ENCODE measurements at regions of chr5 and their contacts with region 1.

Region 1: GRCh38 chr5:56814963-56815658 is at the start of gene MAP3K1:
- DNase-seq: peak; percentile 83 to 93
- H3K4me3 ChIP-seq: peak within 1 kb of the TSS; percentile 96
- H3K27ac ChIP-seq: peak within 1 kb of the TSS; percentile 91
- H3K4me1 ChIP-seq: peaks cover 50% of the 10 kb centered on the region
- H3K27me3 ChIP-seq: no peaks in the 10 kb centered on the region
- CTCF ChIP-seq: no peak
- total RNA-seq, gene MAP3K1: 21.8 and 26.1 TPM in 2 replicates

Region 2: GRCh38 chr5:56211298-56211865 is 603.7 kb before region 1 on chr5:
- CTCF ChIA-PET with region 1: no interaction called
- POLR2A ChIA-PET with region 1: no interaction called
- intact Hi-C with region 1: loop called (anchors 5 kb)
- DNase-seq: peak; percentile 70 to 94
- H3K4me3 ChIP-seq: no peak overlapping the region
- H3K27ac ChIP-seq: peak overlapping the region; percentile 87
- H3K4me1 ChIP-seq: peaks cover 26% of the 10 kb centered on the region
- H3K27me3 ChIP-seq: no peaks in the 10 kb centered on the region
- CTCF ChIP-seq: no peak

Region 3: DNA sequence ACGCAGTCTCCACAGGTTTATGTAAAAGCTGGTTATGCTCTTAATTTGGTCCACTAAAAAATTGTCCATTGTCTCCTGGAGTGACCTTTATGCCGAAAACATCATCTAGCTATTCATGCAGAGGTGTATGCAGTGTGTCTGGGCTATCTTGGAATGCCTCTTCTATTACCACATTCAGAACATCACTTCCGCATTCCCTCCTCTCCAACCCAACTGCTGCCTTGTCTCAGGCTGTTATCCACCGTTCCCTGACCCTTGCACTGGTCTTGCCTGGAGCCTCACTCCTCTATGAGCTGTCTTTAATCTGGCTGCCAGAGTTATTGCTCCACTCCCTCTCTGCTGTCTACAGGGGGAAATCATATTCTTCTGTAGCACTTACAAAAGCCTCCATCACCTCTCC is 367.9 kb before region 1 on chr5:
- CTCF ChIA-PET with region 1: no interaction called
- POLR2A ChIA-PET with region 1: no interaction called
- intact Hi-C with region 1: loop called (anchors 5 kb)
- DNase-seq: peak; percentile 75 to 96
- H3K4me3 ChIP-seq: no peak overlapping the region
- H3K27ac ChIP-seq: peak overlapping the region; percentile 79
- H3K4me1 ChIP-seq: peaks cover 32% of the 10 kb centered on the region
- H3K27me3 ChIP-seq: no peaks in the 10 kb centered on the region
- CTCF ChIP-seq: no peak

Region 4: DNA sequence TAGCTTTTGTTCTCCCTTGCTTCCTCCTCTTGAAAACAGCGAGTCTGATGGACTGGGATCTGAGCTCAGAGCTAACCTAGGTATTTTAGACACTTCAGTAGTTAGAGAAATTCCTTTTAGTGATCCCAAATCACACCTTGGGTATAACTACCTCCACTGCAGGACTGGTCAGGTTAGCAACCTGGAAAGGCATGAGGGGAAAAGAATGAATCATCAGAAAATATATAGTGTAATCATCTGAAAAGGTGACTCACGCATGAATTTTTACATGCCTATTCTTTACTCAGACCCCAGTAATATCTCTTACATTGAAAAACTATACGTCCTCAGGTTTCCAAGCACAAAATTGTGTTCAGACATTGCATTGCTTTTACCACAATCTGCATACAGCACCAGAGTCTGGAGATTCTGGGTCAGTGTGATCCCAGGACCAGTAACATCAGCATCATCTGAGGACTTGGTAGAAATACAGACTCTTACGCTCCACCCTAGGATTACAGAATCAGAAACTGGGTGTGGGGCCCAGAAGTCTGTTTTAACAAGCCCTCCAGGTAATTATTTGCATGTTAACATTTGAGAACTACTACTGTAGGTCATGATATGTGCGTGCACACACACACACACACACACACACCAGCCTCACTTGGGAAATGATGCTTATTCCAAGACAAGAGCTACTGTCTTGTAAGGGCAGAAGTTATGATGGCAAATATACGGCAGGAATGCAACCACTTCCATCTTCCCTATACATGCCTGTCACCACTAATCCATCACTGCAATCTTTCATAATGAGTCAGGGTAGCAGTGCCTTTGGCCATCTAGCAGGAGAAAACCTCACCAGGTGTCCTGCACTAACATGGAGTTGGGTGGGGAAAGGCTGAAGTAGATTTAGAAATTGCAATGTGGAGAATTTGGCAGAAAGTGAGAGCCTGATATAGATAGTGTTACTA is 271.4 kb before region 1 on chr5:
- CTCF ChIA-PET with region 1: no interaction called
- POLR2A ChIA-PET with region 1: no interaction called
- intact Hi-C with region 1: loop called (anchors 5 kb)
- DNase-seq: peak; percentile 62 to 97
- H3K4me3 ChIP-seq: no peak overlapping the region
- H3K27ac ChIP-seq: peak overlapping the region; percentile 96
- H3K4me1 ChIP-seq: peaks cover 39% of the 10 kb centered on the region
- H3K27me3 ChIP-seq: no peaks in the 10 kb centered on the region
- CTCF ChIP-seq: no peak

Region 5: DNA sequence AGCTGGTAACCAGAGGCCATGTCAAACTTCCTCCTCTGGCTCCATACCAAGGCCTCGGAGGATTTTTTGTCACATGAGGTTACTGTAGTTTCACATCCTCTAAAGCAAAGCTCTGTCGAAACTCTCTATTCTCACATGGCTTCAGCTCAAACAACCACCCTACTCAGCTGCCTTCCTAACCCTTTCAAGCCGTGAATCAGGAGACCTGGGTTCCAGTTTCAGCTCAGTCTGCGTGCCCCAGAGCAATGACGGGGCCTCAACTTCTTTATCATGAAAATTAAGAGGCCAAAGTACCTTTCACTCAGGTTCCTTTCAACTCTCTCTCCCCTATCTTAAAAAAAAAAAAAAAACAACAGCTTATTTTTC is 145.0 kb before region 1 on chr5:
- CTCF ChIA-PET with region 1: interaction called, 5 read pairs
- POLR2A ChIA-PET with region 1: no interaction called
- intact Hi-C with region 1: loop called (anchors 5 kb)
- DNase-seq: peak in 1 of 2 experiments; percentile 77
- H3K4me3 ChIP-seq: no peak overlapping the region
- H3K27ac ChIP-seq: peak overlapping the region; percentile 89
- H3K4me1 ChIP-seq: peaks cover 53% of the 10 kb centered on the region
- H3K27me3 ChIP-seq: no peaks in the 10 kb centered on the region
- CTCF ChIP-seq: no peak

Region 6: DNA sequence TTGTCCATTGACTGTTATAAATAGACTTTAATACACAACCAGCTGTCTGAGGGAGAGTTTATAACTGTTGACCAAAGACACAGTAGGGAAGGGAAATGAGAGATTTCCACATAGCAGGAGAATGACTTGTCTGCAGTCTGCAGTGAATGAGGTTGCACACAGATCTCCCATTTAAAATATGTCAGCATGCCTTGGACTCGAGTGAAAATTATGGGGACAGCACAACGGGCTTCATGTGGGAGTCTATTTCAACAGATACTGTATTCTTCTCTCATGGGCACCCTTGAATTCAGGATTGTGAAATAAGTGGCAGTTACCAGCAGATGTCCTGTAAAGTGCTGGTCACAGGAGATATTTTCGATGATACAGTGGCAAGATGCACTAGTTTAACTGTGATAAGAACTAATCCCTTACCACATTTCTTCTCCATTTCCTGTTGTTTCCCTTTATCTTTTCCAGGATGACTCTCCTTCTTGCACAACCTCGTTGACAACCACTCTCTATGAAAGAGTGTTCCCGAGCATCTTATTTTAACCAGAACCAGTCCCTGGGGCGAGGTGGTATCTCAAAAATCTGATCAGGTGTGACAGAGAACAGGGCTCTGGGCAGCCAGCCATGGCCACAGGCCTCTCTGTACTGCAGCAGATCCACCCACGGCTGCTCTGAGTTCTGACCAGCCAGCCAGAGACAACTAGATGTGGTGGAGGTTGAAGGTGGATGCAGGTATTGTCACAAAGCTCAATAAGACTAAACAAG is 51.2 kb before region 1 on chr5:
- CTCF ChIA-PET with region 1: no interaction called
- POLR2A ChIA-PET with region 1: interaction called, 4 read pairs
- intact Hi-C with region 1: loop called (anchors 2 kb)
- DNase-seq: peak; percentile 83 to 86
- H3K4me3 ChIP-seq: peak overlapping the region; percentile 8; the same call in 1 of the 2 replicates
- H3K27ac ChIP-seq: peak overlapping the region; percentile 67
- H3K4me1 ChIP-seq: peaks cover 46% of the 10 kb centered on the region
- H3K27me3 ChIP-seq: no peaks in the 10 kb centered on the region
- CTCF ChIP-seq: no peak

Measured in PC-9 (cell line).